ENCODE measurements at regions of chr17 and their contacts with region 1.

Region 1: GRCh38 chr17:79796763-79797491 is at the start of gene CBX8:
- DNase-seq: peak; percentile 100
- H3K4me3 ChIP-seq: peak within 1 kb of the TSS; percentile 68
- H3K27ac ChIP-seq: peak within 1 kb of the TSS; percentile 51 to 84
- H3K4me1 ChIP-seq: peaks cover 15% of the 10 kb centered on the region
- H3K27me3 ChIP-seq: peaks cover 24% of the 10 kb centered on the region
- CTCF ChIP-seq: peak in 2 of 3 donors; percentile 30 to 56
- EP300 ChIP-seq: peak; percentile 50
- POLR2A ChIP-seq: no peak
- total RNA-seq, gene CBX8: 0.60 to 7.0 (median 3.9) TPM

Region 2: DNA sequence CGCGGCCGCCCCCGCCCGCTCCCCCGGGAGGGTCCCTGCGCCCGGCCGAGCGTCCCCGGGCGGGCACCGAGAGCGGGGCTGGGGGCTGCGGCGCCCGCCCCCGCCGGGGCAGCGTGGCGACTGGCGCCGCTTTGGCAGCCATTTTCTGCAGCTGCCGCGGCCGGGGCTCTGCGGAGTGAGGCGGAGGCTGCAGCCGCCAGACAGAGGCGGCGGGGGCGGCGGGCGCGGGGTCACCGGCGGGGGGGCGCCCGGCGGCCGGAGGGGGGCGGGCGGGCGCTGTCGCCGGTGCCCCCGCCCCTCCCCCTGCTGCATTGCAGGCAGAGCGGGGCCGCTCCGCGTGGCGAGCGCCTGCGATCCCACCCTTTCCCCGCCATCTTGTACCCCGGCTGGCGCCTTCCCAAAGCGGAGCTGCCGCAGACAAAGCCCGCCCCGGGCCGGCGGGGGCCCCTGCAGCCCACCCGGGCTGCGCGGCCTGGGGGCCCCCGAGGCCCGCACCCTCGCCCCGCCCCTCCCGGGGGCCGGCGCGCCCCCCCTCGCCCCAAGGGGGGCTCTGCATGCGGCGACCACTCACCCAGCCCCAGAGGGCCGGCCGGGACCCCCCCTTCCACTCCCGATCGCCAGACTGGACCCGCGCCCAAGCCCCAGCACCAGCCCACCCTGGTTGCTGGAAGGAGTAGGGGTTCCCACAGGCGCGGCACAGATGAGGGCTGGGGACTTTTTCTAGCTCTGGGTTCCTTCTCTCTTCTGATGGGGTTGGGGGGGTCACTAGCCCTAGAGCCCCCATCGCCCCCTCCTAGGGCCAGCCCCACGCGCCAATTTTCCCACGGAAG is 16.6 kb after region 1 on chr17:
- intact Hi-C with region 1: loop called in 1 of 4 experiments (anchors 2 kb)
- DNase-seq: peak in 2 of 5 donors; percentile 43 to 49
- H3K4me3 ChIP-seq: peak overlapping the region; percentile 2
- H3K27ac ChIP-seq: no peak overlapping the region
- H3K4me1 ChIP-seq: no peaks in the 10 kb centered on the region
- H3K27me3 ChIP-seq: peaks cover 29% of the 10 kb centered on the region
- CTCF ChIP-seq: no peak
- EP300 ChIP-seq: no peak
- POLR2A ChIP-seq: no peak

Region 3: DNA sequence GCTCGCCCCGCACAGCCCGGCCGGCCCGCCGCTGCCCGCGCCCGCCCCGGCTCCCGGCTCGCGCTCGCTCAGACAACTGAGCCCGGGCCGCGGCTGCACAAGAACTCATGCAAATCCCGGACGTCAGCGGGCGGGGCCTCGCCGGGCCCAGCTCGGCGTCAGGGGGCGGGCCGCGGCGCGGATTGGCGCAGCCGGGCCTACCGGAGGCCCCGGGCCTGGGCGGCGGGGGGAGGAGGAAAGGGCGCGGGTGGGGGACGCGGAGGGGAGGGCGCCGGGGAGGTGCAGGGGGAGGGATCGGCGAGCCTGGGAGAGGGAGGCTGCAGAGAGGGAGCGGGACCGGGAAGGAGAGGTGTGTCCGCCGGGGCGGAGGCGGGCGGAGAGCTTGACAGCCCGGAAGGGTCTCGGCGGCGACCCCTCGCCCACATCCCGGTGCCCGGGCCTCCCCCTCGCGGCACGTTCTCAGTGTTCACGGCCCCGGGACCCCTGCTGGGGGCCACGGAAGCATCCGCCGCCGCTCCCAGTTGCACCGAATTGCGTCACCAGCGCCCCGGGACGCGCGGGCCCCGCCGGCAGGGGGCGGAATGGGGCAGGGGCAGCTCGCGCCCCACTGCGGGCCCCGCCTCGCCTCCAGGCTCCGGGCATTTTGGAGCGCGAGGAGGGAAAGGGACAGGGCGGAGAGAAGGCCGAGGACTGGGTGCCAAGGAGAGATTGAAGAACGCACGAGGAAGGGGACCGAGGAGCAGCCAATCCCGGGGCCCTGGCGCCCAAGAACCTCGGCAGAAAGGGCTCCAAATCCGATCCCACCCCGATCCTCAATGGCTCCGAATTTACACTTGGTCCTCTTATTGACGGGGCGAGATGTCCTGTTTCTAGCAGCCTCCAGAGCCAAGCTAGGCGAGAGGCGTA is 42.7 kb after region 1 on chr17 and contains the start of gene CBX4:
- intact Hi-C with region 1: loop called in 2 of 4 experiments (anchors 5 to 10 kb)
- DNase-seq: peak; percentile 95 to 96 (median 96)
- H3K4me3 ChIP-seq: peak within 1 kb of the TSS; percentile 63
- H3K27ac ChIP-seq: peak within 1 kb of the TSS; percentile 87 to 92
- H3K4me1 ChIP-seq: peaks cover 24% of the 10 kb centered on the region
- H3K27me3 ChIP-seq: no peaks in the 10 kb centered on the region
- CTCF ChIP-seq: peak; percentile 62 to 86 (median 74)
- EP300 ChIP-seq: no peak
- POLR2A ChIP-seq: peak; percentile 49
- total RNA-seq, gene CBX4: 5.5 to 27.9 (median 16.5) TPM